Dorsolateral prefrontal cortex (tissue), 120 donors: ENCODE measurements at regions of chrX and their contacts with region 1.

Region 1: GRCh38 chrX:110156167-110156754 is 153.3 kb downstream of the TMEM164 start:
- DNase-seq: no peak
- H3K4me3 ChIP-seq: no peak overlapping the region
- H3K27ac ChIP-seq: no peak overlapping the region
- H3K27me3 ChIP-seq: peaks cover 0 to 83% (median 13%) of the 10 kb centered on the region in 45 donors
- CTCF ChIP-seq: peak in 55 of 56 donors; percentile 35 to 77 (median 57)

Region 2: DNA sequence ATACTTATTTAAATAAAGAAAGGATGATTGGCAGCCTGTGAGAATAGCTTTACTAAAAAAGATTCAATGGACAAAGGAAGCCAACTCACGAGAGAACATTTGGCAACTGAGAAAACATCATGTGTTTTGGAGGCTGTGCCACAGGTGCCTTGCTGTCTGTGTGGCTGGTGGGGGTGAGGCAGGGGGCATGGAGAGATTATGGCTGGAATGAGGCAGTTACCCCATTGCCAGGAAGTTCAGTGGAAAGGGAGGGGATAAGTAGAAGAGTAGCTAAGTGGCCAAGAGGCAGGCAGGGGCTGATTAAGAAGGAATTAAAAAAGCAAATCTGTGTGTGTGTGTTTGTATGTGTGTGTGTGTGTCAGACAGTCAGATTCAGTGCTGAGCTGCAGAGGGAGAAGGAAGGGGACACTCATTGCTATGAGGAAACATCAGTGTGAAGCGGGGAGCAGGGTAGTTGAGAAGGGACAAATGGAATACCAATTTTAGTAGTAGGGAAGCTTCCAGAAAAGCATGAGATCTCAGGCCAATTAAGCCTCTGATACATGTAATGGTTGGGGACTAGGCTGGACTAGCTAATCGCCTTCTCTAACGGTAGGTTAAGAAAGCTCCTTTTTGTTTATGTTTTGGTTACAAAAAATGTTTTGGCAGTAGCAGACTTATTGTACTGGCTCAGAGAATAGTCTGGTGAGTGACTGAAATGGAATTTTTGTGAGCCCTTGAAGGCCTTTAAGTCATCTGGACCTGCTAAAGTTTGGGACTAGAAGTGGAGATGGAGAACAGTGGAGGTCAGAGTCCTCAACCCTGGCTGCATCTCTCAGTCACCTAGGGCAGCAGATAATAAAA is 134.9 kb before region 1 on chrX:
- intact Hi-C with region 1: no loop called
- DNase-seq: no peak
- H3K4me3 ChIP-seq: no peak overlapping the region
- H3K27ac ChIP-seq: peak overlapping the region in 2 of 59 donors; percentile 3 to 8
- H3K27me3 ChIP-seq: peaks cover 0 to 73% (median 15%) of the 10 kb centered on the region in 45 donors
- CTCF ChIP-seq: no peak

Region 3: DNA sequence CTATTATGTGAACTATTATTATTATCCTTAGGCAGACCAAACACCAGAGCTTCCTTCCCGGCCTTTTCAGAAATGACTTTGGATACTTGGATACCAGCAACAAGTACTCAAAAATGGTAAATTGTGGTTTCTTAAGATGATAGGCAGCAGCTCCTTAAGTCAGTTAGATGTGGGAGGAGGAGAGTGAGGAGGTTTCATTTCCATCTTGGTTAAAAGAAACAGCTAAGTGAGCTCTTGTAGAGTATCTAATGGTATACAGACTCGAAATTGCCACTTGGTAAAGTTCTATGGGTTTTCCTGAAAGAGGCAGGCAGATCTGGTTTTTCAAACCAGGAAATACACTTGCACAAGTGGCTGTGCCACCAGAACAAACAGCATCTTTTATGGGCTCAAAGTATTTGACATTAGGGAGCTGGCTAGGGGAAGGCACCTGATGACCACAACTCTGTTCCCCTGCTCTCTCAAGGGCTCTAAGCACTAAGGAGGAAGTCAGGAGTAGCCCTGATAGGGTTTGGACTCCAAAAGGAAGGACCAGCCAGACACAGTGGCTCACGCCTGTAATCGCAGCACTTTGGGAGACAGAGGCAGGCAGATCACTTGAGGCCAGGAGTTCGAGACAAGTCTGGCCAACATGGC is 22.4 kb before region 1 on chrX:
- intact Hi-C with region 1: no loop called
- DNase-seq: no peak
- H3K4me3 ChIP-seq: no peak overlapping the region
- H3K27ac ChIP-seq: no peak overlapping the region
- H3K27me3 ChIP-seq: peaks cover 0 to 73% (median 16%) of the 10 kb centered on the region in 45 donors
- CTCF ChIP-seq: no peak

Region 4: GRCh38 chrX:110407910-110408545 is 251.8 kb after region 1 on chrX:
- intact Hi-C with region 1: loop called (anchors 2 to 5 kb)
- DNase-seq: peak in 2 of 10 donors; percentile 43 to 46
- H3K4me3 ChIP-seq: no peak overlapping the region
- H3K27ac ChIP-seq: no peak overlapping the region
- H3K27me3 ChIP-seq: peaks cover 0 to 82% (median 26%) of the 10 kb centered on the region in 45 donors
- CTCF ChIP-seq: peak; percentile 45 to 89 (median 77)

Region 5: DNA sequence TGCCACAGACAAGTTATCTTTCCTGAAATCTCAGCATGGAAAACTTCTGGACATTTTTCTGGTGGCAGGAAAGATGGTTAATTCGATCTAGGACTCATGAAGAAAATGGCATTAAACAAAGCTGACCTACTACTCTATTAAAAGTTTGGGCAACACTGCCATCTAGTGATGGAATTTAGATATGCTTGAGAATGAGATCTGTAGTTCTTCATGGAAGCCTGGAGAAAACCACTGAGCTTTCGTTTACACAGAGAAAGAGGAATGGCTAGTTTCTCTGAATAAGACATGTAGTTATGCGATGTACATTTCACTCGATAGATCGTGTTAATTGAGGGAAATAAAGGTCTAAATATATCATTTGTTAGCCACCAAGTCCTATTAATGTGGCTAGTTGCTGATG is 691.1 kb after region 1 on chrX:
- intact Hi-C with region 1: loop called in 1 of 2 experiments (anchors 5 kb)
- DNase-seq: peak in 1 of 10 donors; percentile 4
- H3K4me3 ChIP-seq: no peak overlapping the region
- H3K27ac ChIP-seq: no peak overlapping the region
- H3K27me3 ChIP-seq: peaks cover 0 to 86% (median 25%) of the 10 kb centered on the region in 45 donors
- CTCF ChIP-seq: peak; percentile 49 to 91 (median 75)